ENCODE measurements at regions of chr6 and their contacts with region 1.

Region 1: GRCh38 chr6:106163446-106163965 is 77.4 kb downstream of the PRDM1 start:
- DNase-seq: peak; percentile 37
- ATAC-seq: peak; percentile 57
- H3K4me3 Mint-ChIP-seq: peak overlapping the region; percentile 36
- H3K27ac Mint-ChIP-seq: peak overlapping the region; percentile 92
- H3K4me1 Mint-ChIP-seq: peaks cover 35% of the 10 kb centered on the region
- H3K27me3 Mint-ChIP-seq: no peaks in the 10 kb centered on the region
- CTCF ChIP-seq: no peak

Region 2: GRCh38 chr6:105867277-105867676 is 296.2 kb before region 1 on chr6:
- CTCF ChIA-PET with region 1: no interaction called
- POLR2A ChIA-PET with region 1: no interaction called
- intact Hi-C with region 1: no loop called
- DNase-seq: no peak
- ATAC-seq: no peak
- H3K4me3 Mint-ChIP-seq: no peak overlapping the region
- H3K27ac Mint-ChIP-seq: peak overlapping the region; percentile 10
- H3K4me1 Mint-ChIP-seq: peaks cover 59% of the 10 kb centered on the region
- H3K27me3 Mint-ChIP-seq: peaks cover 3% of the 10 kb centered on the region
- CTCF ChIP-seq: no peak

Region 3: DNA sequence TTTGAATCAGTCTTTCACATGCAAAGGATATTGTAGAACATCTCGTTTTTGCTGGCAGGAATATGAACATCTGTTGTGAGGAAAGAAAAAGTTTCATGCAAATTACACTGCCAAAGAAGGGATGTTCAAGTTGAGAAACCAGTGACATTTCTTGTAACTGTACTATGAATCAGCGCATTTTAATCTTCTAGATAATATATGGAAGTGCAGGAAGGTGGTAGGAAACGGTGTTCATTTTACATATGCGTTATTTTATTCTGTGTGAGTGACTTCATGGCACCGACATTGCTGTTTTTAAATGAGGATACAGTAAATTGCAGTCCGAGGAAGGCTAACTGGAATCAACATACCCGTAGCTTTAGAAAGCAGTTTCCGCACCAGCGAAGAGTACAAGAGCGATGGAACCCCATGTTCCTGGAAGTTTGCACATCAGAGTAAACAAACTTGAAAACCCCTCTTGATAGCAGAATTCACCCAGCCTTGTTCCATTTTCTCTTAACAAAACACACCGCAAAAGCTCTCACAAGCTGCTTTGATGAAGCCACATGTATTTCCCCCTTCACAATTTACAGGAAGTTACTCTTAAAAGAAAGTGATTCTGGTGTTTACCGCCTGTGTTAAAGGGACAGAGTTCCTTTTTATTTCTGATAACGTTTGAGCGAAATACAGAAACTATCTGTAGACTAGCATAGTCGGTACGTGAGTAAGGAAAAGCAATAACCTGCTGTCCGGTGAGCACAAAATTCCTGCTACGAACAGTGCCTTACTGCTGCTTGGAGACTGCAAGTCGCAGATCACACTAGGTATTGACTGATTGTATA is 65.9 kb before region 1 on chr6:
- CTCF ChIA-PET with region 1: interaction called, 8 read pairs
- POLR2A ChIA-PET with region 1: interaction called, 23 read pairs
- intact Hi-C with region 1: loop called (anchors 1 kb)
- DNase-seq: no peak
- ATAC-seq: peak; percentile 74
- H3K4me3 Mint-ChIP-seq: peak overlapping the region; percentile 89
- H3K27ac Mint-ChIP-seq: peak overlapping the region; percentile 94
- H3K4me1 Mint-ChIP-seq: peaks cover 84% of the 10 kb centered on the region
- H3K27me3 Mint-ChIP-seq: no peaks in the 10 kb centered on the region
- CTCF ChIP-seq: no peak

Region 4: DNA sequence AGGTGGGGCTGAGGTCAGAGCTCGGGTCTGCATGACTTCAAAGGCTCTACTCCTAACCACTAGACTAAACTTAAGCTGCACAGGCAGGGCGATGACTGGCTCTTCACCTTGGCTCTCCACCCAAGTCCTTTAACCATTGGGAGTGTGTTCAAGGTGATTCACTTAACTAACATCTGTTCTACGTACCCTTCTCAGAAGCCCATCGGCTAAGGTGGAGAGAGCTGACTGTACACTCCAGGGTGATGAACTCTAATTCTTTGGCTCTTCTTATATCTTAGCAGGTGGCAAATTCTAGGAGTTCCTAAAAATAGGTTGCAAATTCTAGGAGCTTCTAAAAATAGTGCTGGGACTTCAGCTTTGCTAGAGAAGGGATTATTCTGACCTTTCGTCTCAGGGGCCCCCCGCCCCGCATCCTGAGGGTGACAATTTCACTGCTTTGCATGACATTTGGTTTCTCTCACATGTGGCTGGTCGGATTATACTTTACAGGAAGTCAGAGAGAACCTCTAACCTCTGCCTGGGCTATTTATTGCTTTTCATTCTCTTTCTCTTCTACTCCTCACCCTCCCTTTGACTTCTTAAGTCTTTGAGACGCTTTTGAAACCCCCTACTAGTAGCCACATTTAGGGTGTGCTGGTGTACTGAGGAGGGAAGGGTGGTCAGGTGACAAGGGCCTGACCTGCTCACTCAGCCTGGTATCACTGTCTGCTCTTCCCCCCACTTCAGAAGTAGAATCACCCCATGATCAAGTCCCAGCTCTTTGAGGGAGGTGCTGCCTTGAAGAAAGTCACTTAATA is 21.9 kb before region 1 on chr6:
- CTCF ChIA-PET with region 1: interaction called, 3 read pairs
- POLR2A ChIA-PET with region 1: interaction called, 19 read pairs
- intact Hi-C with region 1: loop called (anchors 1 kb)
- DNase-seq: no peak
- ATAC-seq: peak; percentile 72
- H3K4me3 Mint-ChIP-seq: peak overlapping the region; percentile 69
- H3K27ac Mint-ChIP-seq: peak overlapping the region; percentile 88
- H3K4me1 Mint-ChIP-seq: peaks cover 43% of the 10 kb centered on the region
- H3K27me3 Mint-ChIP-seq: no peaks in the 10 kb centered on the region
- CTCF ChIP-seq: no peak

Region 5: GRCh38 chr6:106194949-106195921 is 31.7 kb after region 1 on chr6:
- CTCF ChIA-PET with region 1: interaction called, 3 read pairs
- POLR2A ChIA-PET with region 1: interaction called, 3 read pairs
- intact Hi-C with region 1: loop called (anchors 5 kb)
- DNase-seq: no peak
- ATAC-seq: peak; percentile 77
- H3K4me3 Mint-ChIP-seq: peak overlapping the region; percentile 9
- H3K27ac Mint-ChIP-seq: peak overlapping the region; percentile 41
- H3K4me1 Mint-ChIP-seq: peaks cover 34% of the 10 kb centered on the region
- H3K27me3 Mint-ChIP-seq: no peaks in the 10 kb centered on the region
- CTCF ChIP-seq: no peak

Region 6: GRCh38 chr6:107820338-107821261 is 1657.1 kb after region 1 on chr6:
- CTCF ChIA-PET with region 1: no interaction called
- POLR2A ChIA-PET with region 1: no interaction called
- intact Hi-C with region 1: loop called (anchors 5 kb)
- DNase-seq: no peak
- ATAC-seq: peak; percentile 23
- H3K4me3 Mint-ChIP-seq: peak overlapping the region; percentile 86
- H3K27ac Mint-ChIP-seq: peak overlapping the region; percentile 85
- H3K4me1 Mint-ChIP-seq: peaks cover 74% of the 10 kb centered on the region
- H3K27me3 Mint-ChIP-seq: no peaks in the 10 kb centered on the region
- CTCF ChIP-seq: no peak

Measured in activated B cell treated with CpG ODN at 0.5 μM for 24 hours (primary cell).